Mammary epithelial cell (primary cell): ENCODE measurements at regions of chr1 and their contacts with region 1.

Region 1: DNA sequence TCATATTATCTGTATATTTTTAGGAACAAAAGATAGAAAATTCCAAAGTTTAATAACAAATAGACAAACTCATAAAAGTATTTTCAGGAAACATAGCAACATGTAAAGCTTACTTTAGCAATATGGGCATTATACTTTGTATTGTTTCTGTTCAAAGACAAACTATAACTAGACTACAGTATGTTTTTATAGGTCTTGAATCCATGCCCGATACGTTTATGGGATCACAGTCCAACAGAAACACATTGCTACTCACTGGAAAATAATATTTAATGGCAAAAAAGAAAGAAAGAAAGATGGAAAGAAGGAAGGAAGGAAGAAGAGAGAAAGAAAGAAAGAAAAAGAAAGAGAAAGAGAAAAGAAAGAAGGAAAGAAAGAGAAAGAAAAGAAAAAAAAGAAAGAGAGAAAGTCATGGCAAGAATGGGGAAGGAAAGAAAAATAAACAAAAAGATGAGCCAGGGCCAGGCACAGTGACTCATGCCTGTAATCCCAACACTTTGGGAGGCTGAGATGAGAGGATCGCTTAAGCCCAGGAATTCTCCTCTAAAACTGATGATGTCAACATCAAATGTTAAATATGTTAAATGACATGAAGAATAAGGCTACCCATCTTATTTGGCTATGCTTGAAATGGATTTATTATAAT is 32.7 kb downstream of the TM2D1 start:
- DNase-seq: peak; percentile 14
- H3K4me3 ChIP-seq: no peak overlapping the region
- H3K27ac ChIP-seq: no peak overlapping the region
- H3K4me1 ChIP-seq: peaks cover 6% of the 10 kb centered on the region
- H3K27me3 ChIP-seq: no peaks in the 10 kb centered on the region
- CTCF ChIP-seq: no peak

Region 2: GRCh38 chr1:61842871-61843514 is 150.7 kb after region 1 on chr1:
- CTCF ChIA-PET with region 1: no interaction called
- dilution Hi-C with region 1: no loop called
- in situ Hi-C with region 1: no loop called
- intact Hi-C with region 1: loop called (anchors 10 kb)
- DNase-seq: peak; percentile 5
- H3K4me3 ChIP-seq: no peak overlapping the region
- H3K27ac ChIP-seq: no peak overlapping the region
- H3K4me1 ChIP-seq: peaks cover 11% of the 10 kb centered on the region
- H3K27me3 ChIP-seq: no peaks in the 10 kb centered on the region
- CTCF ChIP-seq: peak in 1 of 2 donors; percentile 24